ENCODE measurements at regions of chr2 and their contacts with region 1.

Region 1: DNA sequence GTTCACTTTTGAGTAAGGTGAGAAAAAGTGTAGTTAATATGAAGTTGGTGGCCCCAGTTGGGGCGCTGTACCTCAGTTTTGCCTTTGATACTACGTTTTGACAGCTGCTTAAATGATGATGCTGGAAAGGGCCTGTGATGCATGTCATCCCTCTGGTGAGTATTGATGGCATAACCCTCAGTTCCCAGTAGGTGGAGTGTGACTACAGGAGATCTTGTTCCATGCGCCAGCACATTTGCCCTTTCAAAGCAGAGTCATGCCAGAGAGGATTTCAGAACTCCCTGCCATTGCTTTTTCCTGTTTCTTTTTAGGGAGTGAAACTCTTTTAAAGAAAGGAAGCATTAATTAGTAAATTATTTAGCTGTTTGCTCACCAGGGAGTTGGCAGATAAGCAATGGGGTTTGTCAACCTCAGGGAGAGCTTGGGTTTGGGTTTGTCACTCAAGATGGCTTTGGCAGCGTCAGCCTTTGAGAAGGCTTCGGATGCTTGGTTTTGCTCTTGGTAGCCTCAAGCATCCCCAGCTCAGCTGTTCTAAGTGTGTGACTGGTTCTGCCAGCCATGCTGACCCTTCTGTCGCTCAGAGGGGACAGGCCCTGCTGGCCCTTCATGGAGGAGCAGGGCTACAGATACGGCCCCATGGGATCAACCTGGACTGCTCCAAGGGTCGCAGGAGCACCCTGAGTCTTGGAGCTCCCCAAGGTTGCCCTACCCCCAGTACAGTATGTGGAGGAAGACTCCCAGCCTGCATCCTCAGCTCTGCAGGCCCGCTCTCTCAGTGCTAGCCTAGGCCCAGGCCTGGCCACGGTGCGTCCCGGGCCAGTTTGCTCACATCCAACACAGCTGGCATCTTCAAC is 29.1 kb downstream of the ARMC9 start:
- DNase-seq: peak; percentile 85
- H3K4me3 Mint-ChIP-seq: no peak overlapping the region
- H3K27ac Mint-ChIP-seq: no peak overlapping the region
- H3K4me1 Mint-ChIP-seq: no peaks in the 10 kb centered on the region
- H3K27me3 Mint-ChIP-seq: no peaks in the 10 kb centered on the region

Region 2: DNA sequence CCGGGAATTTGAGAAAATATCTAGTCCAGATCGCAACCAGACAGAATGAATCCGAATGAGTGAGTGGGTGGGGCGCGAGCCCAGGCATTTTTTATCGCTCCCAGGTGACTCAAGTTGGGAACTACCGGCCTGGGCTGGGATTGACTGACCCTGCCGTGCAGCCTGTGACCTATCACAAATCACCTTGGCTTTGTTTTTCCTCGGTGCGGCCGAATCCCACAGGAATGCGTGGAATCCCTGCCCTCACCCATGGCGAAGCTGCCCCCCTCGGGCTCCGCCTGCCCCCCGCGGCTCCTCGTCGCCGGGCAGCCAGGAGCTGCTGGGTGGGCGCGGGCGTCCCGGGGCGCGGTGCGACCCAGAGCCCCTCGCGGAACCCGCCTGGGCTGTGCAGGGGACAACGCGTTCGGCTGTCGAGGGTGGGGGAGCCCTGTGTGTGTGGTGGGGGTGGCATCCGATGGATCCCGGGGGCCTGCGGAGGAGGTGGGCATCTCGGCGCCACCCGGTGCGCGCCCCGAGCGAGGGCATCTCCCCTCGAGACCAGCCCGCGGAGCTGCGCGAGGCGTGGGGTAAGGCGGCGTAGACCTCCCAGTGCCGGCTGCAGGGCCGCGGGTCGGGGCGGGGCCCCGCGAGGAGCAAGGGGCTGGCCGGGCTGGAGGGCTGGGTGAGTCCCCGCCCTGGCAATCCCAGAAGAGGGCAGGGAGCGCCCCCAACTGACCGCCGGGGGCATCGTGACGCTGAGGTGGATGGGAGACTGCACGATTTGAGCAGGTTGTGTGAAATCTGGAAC is 184.5 kb after region 1 on chr2:
- intact Hi-C with region 1: loop called (anchors 5 kb)
- DNase-seq: peak; percentile 86
- H3K4me3 Mint-ChIP-seq: peak overlapping the region; percentile 26
- H3K27ac Mint-ChIP-seq: no peak overlapping the region
- H3K4me1 Mint-ChIP-seq: peaks cover 2% of the 10 kb centered on the region
- H3K27me3 Mint-ChIP-seq: peaks cover 44% of the 10 kb centered on the region

Region 3: GRCh38 chr2:231436957-231437356 is 209.4 kb after region 1 on chr2:
- intact Hi-C with region 1: no loop called
- DNase-seq: no peak
- H3K4me3 Mint-ChIP-seq: no peak overlapping the region
- H3K27ac Mint-ChIP-seq: no peak overlapping the region
- H3K4me1 Mint-ChIP-seq: peaks cover 5% of the 10 kb centered on the region
- H3K27me3 Mint-ChIP-seq: peaks cover 1% of the 10 kb centered on the region

Region 4: GRCh38 chr2:231452799-231453508 is 225.4 kb after region 1 on chr2:
- intact Hi-C with region 1: loop called (anchors 1 kb)
- DNase-seq: no peak
- H3K4me3 Mint-ChIP-seq: no peak overlapping the region
- H3K27ac Mint-ChIP-seq: peak overlapping the region; percentile 60
- H3K4me1 Mint-ChIP-seq: peaks cover 17% of the 10 kb centered on the region
- H3K27me3 Mint-ChIP-seq: no peaks in the 10 kb centered on the region